Ovary (tissue), 10 donors: ENCODE measurements at regions of chr3 and their contacts with region 1.

Region 1: GRCh38 chr3:183533410-183534132 is 21.9 kb downstream of the KLHL6 start:
- DNase-seq: no peak
- H3K4me3 ChIP-seq: no peak overlapping the region
- H3K27ac ChIP-seq: no peak overlapping the region
- H3K4me1 ChIP-seq: peaks cover 2% of the 10 kb centered on the region
- H3K27me3 ChIP-seq: no peaks in the 10 kb centered on the region
- CTCF ChIP-seq: no peak
- EP300 ChIP-seq: no peak
- POLR2A ChIP-seq: no peak

Region 2: GRCh38 chr3:183317886-183318865 is 215.4 kb before region 1 on chr3:
- intact Hi-C with region 1: no loop called
- DNase-seq: no peak
- H3K4me3 ChIP-seq: no peak overlapping the region
- H3K27ac ChIP-seq: no peak overlapping the region
- H3K4me1 ChIP-seq: no peaks in the 10 kb centered on the region
- H3K27me3 ChIP-seq: no peaks in the 10 kb centered on the region
- CTCF ChIP-seq: no peak
- EP300 ChIP-seq: no peak
- POLR2A ChIP-seq: no peak

Region 3: DNA sequence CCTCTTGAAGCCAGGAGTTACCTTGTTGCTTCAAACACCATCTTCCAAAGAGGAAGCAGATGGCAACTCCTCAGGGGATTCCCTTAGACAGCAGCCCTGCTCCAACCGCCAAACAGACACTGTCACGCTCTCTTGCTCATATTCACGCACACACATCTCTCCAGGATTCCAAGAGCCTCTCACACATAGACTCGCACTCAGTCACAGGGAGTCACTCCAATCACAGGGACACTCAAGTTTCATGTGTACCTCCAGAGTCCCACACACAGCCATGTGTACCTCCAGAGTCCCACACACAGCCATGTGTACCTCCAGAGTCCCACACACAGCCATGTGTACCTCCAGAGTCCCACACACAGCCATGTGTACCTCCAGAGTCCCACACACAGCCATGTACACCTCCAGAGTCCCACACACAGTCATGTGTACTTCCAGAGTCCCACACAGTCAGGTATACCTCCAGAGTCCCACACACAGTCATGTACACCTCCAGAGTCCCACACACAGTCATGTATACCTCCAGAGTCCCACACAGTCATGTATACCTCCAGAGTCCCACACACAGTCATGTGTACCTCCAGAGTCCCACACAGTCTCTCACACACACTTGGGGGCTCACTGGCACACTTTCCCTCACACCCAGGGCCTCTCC is 701.9 kb after region 1 on chr3:
- intact Hi-C with region 1: loop called in 1 of 4 experiments (anchors 5 kb)
- DNase-seq: no peak
- H3K4me3 ChIP-seq: no peak overlapping the region
- H3K27ac ChIP-seq: no peak overlapping the region
- H3K4me1 ChIP-seq: peaks cover 4% of the 10 kb centered on the region
- H3K27me3 ChIP-seq: no peaks in the 10 kb centered on the region
- CTCF ChIP-seq: no peak
- EP300 ChIP-seq: no peak
- POLR2A ChIP-seq: no peak